Colonic mucosa (tissue), 4 donors: ENCODE measurements at regions of chr4 and their contacts with region 1.

Region 1: DNA sequence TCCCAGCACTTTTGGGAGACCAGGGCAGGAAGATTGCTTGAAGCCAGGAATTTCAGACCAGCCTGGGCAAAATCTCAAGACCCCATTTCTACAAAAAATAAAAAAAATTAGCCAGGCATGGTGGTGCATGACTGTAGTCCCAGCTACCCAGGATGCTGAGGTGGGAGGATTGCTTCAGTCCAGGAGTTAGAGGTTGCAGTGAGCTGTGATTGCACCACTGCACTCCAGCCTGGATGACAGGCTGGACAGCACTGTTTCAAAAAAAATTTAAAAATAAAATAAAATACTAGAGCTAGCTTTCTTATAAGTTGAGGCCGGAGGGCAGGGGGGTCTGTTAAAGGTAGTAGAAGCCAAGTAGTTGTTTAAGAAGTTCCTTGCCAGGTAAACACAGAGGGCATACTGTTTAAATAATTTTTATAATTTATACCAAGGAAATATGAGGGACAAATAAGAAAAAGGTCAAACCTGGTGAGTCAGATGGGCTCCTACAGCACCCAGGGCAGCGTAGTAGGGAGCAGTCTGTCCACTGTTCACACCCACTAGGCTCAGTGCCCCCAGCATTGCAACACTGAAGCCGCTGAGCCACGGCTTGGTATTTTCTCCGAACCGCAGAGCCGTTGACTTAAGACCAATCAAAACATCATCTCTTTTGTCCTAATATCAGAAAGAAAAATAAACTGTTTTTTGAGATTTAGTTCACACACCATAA is 17.3 kb downstream of the COQ2 start:
- DNase-seq: no peak
- H3K4me3 ChIP-seq: no peak overlapping the region
- H3K27ac ChIP-seq: no peak overlapping the region
- H3K4me1 ChIP-seq: no peaks in the 10 kb centered on the region
- H3K27me3 ChIP-seq: no peaks in the 10 kb centered on the region
- CTCF ChIP-seq: no peak

Region 2: GRCh38 chr4:82462415-82462831 is 804.9 kb before region 1 on chr4:
- intact Hi-C with region 1: loop called (anchors 10 kb)
- DNase-seq: peak; percentile 89
- H3K4me3 ChIP-seq: no peak overlapping the region
- H3K27ac ChIP-seq: no peak overlapping the region
- H3K4me1 ChIP-seq: no peaks in the 10 kb centered on the region
- H3K27me3 ChIP-seq: no peaks in the 10 kb centered on the region
- CTCF ChIP-seq: peak; percentile 89

Region 3: GRCh38 chr4:82578935-82579334 is 688.3 kb before region 1 on chr4:
- intact Hi-C with region 1: no loop called
- DNase-seq: no peak
- H3K4me3 ChIP-seq: no peak overlapping the region
- H3K27ac ChIP-seq: no peak overlapping the region
- H3K4me1 ChIP-seq: no peaks in the 10 kb centered on the region
- H3K27me3 ChIP-seq: no peaks in the 10 kb centered on the region
- CTCF ChIP-seq: no peak

Region 4: GRCh38 chr4:82842593-82842992 is 424.7 kb before region 1 on chr4:
- intact Hi-C with region 1: no loop called
- DNase-seq: no peak
- H3K4me3 ChIP-seq: no peak overlapping the region
- H3K27ac ChIP-seq: no peak overlapping the region
- H3K4me1 ChIP-seq: no peaks in the 10 kb centered on the region
- H3K27me3 ChIP-seq: no peaks in the 10 kb centered on the region
- CTCF ChIP-seq: no peak

Region 5: GRCh38 chr4:83074086-83074704 is 193.1 kb before region 1 on chr4:
- intact Hi-C with region 1: loop called (anchors 5 kb)
- DNase-seq: peak; percentile 66
- H3K4me3 ChIP-seq: no peak overlapping the region
- H3K27ac ChIP-seq: no peak overlapping the region
- H3K4me1 ChIP-seq: no peaks in the 10 kb centered on the region
- H3K27me3 ChIP-seq: no peaks in the 10 kb centered on the region
- CTCF ChIP-seq: peak; percentile 71

Region 6: GRCh38 chr4:83308672-83309071 is 41.4 kb after region 1 on chr4:
- intact Hi-C with region 1: no loop called
- DNase-seq: peak; percentile 29
- H3K4me3 ChIP-seq: no peak overlapping the region
- H3K27ac ChIP-seq: no peak overlapping the region
- H3K4me1 ChIP-seq: no peaks in the 10 kb centered on the region
- H3K27me3 ChIP-seq: no peaks in the 10 kb centered on the region
- CTCF ChIP-seq: no peak

Region 7: GRCh38 chr4:83599183-83599582 is 331.9 kb after region 1 on chr4:
- intact Hi-C with region 1: no loop called
- DNase-seq: no peak
- H3K4me3 ChIP-seq: no peak overlapping the region
- H3K27ac ChIP-seq: no peak overlapping the region
- H3K4me1 ChIP-seq: peaks cover 4% of the 10 kb centered on the region
- H3K27me3 ChIP-seq: no peaks in the 10 kb centered on the region
- CTCF ChIP-seq: no peak